ENCODE measurements at regions of chr12 and their contacts with region 1.

Region 1: DNA sequence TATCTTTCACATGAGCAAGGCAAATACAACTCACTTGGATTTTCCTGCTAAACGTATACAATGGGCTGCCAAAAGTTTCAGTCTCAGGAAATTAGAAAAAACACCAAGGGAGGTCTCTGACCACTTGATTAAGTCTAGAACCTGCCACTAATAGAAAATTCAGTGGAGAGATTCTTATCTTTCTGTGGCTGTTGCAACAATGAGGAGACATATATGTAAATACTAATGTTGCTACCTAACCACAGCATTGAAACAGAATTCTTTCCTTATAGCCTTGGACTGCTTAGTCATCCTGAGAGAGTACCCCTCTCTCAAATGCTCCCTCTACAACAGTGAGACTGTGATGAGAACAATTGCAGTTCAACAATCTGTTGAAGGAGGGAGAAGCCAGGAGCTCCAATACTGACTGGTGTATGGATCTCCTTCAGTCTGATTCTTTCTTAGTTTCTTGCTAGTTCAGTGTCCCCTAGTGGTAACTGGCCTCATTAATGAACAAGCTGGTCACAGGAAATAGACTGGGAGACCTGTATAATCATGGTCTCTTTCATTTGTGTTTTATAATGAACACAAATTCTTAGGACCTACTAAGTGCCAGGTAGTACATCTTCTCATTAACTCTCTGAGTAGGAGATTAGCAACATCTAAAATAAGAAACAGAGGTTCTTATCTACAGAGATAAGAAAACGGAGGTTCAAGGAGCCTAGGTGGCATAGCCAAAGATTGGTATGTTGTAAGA is 164.5 kb downstream of the SLC38A4 start:
- DNase-seq: peak; percentile 69

Region 2: GRCh38 chr12:46372544-46373110 is 288.7 kb before region 1 on chr12 and contains the start of gene SLC38A2:
- in situ Hi-C with region 1: loop called (anchors 25 kb)
- DNase-seq: peak; percentile 90

Region 3: DNA sequence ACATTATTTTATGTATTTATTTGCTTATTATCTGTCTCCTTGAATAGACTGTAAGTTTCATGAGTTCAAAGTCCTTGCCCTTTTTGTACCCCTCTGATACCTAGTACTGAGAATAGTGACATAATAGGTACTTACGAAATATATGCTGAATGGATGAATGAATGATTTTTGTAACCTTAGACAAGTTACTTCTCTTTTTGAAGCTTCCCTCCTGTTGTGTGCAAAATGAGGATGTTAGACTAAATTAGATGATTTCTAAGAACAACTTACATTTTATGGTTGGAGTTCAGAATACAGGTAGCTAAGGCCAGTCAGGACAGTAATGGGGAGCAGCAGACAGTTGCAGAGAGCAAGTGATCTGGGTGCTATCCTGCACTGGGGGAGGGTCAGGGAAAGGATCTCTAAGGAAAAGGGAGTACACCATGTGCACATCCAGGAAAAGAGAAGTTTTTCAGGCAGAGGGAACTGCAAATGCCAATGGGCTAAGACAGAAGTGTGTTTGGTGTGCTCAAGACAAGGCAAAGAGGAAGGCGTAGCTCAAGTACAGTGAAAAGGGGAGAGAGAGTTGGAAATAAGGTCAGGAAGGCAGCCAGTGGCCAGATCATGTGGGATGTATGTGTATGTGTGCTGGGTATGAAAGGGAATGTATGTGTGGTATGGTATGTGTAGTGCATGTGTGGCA is 477.9 kb after region 1 on chr12:
- in situ Hi-C with region 1: no loop called
- DNase-seq: peak; percentile 77

Region 4: GRCh38 chr12:47504775-47505446 is 843.6 kb after region 1 on chr12:
- in situ Hi-C with region 1: no loop called
- DNase-seq: no peak